ENCODE measurements at regions of chr12 and their contacts with region 1.

Region 1: GRCh38 chr12:96985480-96986362 is 78.7 kb downstream of the NEDD1 start:
- DNase-seq: peak; percentile 78
- CTCF ChIP-seq: peak; percentile 97

Region 2: DNA sequence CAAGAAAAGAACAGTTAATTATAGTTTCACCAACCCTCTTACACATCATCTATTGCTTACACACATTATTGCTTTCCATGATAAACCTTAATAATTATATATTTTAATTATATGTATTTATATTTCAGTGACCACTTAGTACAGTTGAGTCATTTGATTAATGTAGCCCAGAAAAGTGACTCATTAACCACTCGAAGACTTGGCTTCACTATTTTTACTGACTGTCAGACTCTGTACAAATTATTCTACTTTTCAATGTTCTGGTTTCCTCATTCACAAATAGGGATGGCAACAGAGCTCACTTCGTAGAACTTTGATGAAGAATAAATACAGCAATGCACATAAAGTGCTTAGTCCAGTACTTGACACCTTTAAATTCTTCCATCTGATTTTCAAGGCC is 398.0 kb before region 1 on chr12:
- in situ Hi-C with region 1: loop called (anchors 10 kb)
- DNase-seq: no peak
- CTCF ChIP-seq: no peak

Region 3: DNA sequence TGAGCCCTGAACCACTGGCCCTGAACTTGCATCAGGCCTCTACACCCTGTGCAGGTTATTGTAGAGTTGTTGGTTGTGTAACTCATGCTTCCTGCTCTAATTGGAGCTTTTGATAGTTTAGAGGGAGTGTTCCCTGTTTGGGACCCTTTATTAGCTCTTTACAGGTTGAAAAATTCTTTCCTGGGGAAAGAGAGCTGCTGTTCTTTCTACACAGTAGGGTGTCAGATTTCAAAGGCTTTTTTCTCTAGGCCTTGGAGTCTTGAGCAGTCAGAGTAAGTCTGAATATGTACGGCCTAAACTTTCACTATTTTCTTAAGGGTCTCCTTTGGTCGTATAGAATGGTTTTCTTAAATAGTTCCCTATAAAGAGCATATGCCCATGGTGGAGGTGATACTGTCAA is 139.4 kb before region 1 on chr12:
- in situ Hi-C with region 1: no loop called
- DNase-seq: no peak
- CTCF ChIP-seq: no peak

Region 4: GRCh38 chr12:97308576-97309198 is 323.0 kb after region 1 on chr12:
- in situ Hi-C with region 1: loop called (anchors 25 kb)
- DNase-seq: no peak
- CTCF ChIP-seq: peak; percentile 48

Region 5: GRCh38 chr12:97336900-97337751 is 351.4 kb after region 1 on chr12:
- in situ Hi-C with region 1: no loop called
- DNase-seq: no peak
- CTCF ChIP-seq: no peak

Region 6: DNA sequence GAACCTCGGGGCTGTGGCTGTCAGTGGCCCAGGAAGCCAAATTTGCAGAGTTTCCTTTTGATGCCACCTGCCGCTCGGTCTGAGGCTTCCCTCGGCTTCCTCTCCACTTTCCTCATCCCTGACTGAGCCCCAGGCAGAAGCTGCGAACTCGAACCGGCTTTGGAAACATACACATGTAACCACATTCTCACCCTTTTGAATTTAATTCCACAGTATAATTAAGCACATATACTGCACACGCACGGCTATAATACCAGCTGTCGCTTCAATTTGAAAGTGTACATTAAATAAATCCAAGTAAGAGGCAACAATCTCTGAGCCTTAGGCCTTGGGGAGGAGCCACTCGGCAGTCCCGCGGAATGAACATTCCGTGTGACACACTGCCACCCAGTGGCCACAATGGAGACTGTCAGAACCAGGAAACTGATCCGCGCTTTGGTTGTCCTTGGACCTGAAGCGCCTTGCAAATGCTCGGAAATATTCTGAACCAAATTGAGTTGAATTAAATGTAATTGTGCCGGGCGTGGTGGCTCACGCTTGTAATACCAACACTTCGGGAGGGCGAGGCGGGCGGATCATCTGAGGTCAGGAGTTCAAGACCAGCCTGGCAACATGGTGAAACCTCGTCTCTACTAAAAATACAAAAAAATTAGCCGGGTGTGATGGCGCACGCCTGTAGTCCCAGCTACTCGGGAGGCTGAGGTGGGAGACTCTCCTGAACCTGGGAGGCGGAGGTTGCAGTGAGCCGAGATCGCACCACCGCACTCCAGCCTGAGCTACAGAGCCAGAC is 1411.8 kb after region 1 on chr12:
- in situ Hi-C with region 1: loop called (anchors 25 kb)
- DNase-seq: peak; percentile 74
- CTCF ChIP-seq: peak; percentile 95